ENCODE measurements at regions of chr6 and their contacts with region 1.

Region 1: GRCh38 chr6:44265007-44265721 is at the start of gene NFKBIE:
- DNase-seq: peak; percentile 96
- ATAC-seq: peak; percentile 52
- H3K4me3 ChIP-seq: peak within 1 kb of the TSS; percentile 94 to 99 (median 98)
- H3K4me3 Mint-ChIP-seq: peak within 1 kb of the TSS; percentile 100
- H3K27ac ChIP-seq: peak within 1 kb of the TSS; percentile 96 to 98
- H3K27ac Mint-ChIP-seq: peak within 1 kb of the TSS; percentile 100
- H3K4me1 ChIP-seq: peaks cover 48 to 61% of the 10 kb centered on the region in 2 donors
- H3K4me1 Mint-ChIP-seq: peaks cover 69% of the 10 kb centered on the region
- H3K27me3 ChIP-seq: peaks cover 0 to 13% (median 4%) of the 10 kb centered on the region in 4 experiments
- H3K27me3 Mint-ChIP-seq: peaks cover 8% of the 10 kb centered on the region
- CTCF ChIP-seq: peak; percentile 66
- total RNA-seq, gene NFKBIE: 46.5 and 50.8 TPM in 2 replicates

Region 2: DNA sequence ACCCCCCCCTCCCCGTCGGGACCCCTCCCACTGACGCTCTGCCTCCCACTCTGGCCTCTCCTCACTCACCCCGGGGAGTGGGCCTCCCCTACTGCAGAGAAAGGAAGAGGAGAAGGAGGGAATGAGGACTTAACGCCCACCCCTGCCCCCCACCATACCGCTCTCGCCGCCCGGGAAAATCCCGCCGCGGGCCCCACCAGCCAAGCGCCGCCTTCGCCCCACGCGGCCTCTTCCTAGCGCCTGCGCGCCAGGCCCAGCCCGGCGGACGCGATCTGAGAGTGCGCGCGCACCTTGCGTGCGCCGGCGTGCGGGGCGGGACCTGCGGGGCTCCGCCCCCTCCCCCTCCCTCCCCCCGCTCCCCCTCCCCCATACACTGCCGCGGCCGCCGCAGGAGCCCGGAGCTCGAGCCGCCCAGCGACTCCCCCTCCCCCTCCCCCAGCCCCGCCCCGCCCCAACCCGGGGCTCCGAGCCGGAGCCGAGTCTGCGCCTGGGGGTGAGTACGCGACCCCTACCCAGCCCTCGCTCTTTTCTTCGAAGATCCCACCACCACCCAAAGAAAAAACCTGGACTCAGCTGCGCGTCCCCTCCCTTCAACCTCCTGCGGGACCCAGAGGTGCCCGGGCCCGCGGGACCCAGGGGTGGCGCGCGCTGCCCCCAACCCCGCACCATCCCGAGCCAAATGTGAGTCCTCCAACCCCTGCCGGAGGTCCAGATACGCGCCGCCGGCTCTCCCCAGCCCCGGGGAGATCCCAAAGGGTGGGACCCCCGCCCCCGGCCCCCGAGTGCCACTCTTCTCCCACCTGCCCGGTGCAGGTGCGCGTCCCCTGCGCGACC is 137.8 kb before region 1 on chr6 and contains the starts of genes MRPL14 and TMEM63B:
- CTCF ChIA-PET with region 1: no interaction called
- POLR2A ChIA-PET with region 1: no interaction called
- intact Hi-C with region 1: loop called (anchors 5 kb)
- DNase-seq: peak; percentile 94
- ATAC-seq: peak; percentile 91
- H3K4me3 ChIP-seq: peak within 1 kb of the TSS; percentile 62 to 98 (median 91)
- H3K4me3 Mint-ChIP-seq: peak within 1 kb of the TSS; percentile 95
- H3K27ac ChIP-seq: peak within 1 kb of the TSS; percentile 83 to 94
- H3K27ac Mint-ChIP-seq: peak within 1 kb of the TSS; percentile 93
- H3K4me1 ChIP-seq: peaks cover 35 to 47% of the 10 kb centered on the region in 2 donors
- H3K4me1 Mint-ChIP-seq: peaks cover 50% of the 10 kb centered on the region
- H3K27me3 ChIP-seq: no peaks in the 10 kb centered on the region
- H3K27me3 Mint-ChIP-seq: no peaks in the 10 kb centered on the region
- CTCF ChIP-seq: no peak
- total RNA-seq, gene MRPL14: 16.7 and 16.8 TPM in 2 replicates
- total RNA-seq, gene TMEM63B: 18.3 and 19.1 TPM in 2 replicates

Region 3: DNA sequence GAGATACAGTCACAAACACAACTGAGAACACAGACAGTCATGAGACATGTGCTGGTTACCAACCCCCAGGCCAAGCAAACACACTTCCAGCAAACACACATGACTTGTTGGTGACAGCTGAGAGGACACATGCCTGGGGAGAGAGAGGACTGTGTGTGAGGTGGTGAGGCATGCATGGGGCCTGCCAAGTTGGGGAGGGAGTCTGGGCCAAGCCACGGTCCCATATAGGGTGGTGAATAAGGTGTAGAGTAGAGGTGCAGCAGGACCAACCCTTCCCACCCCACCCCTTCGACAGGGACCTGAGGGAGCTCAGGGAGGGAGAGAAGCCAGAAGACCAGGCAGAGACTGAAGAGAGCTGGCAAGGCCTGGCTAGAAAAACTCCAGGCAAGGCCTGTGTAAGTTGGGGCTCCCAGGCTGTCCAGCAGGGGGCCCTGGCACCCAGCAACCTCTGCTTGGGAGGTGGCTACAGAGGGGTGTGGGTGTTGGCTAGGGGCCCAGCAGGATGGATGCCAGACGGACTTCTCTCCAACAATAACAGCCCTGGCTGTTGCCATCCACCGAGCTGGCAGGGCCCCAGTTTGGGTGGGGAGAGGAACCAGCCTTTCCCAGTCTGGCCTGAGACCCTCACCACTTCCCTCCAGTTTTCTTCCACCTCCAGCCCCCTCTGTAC is 43.7 kb before region 1 on chr6:
- CTCF ChIA-PET with region 1: interaction called, 16 read pairs
- POLR2A ChIA-PET with region 1: no interaction called
- intact Hi-C with region 1: loop called (anchors 1 kb)
- DNase-seq: peak; percentile 81
- ATAC-seq: peak; percentile 40
- H3K4me3 ChIP-seq: no peak overlapping the region
- H3K4me3 Mint-ChIP-seq: peak overlapping the region; percentile 58
- H3K27ac ChIP-seq: no peak overlapping the region
- H3K27ac Mint-ChIP-seq: peak overlapping the region; percentile 13
- H3K4me1 ChIP-seq: peaks cover 26 to 45% of the 10 kb centered on the region in 2 donors
- H3K4me1 Mint-ChIP-seq: peaks cover 41% of the 10 kb centered on the region
- H3K27me3 ChIP-seq: peaks cover 0 to 2% (median 0%) of the 10 kb centered on the region in 4 experiments
- H3K27me3 Mint-ChIP-seq: no peaks in the 10 kb centered on the region
- CTCF ChIP-seq: peak; percentile 80

Region 4: DNA sequence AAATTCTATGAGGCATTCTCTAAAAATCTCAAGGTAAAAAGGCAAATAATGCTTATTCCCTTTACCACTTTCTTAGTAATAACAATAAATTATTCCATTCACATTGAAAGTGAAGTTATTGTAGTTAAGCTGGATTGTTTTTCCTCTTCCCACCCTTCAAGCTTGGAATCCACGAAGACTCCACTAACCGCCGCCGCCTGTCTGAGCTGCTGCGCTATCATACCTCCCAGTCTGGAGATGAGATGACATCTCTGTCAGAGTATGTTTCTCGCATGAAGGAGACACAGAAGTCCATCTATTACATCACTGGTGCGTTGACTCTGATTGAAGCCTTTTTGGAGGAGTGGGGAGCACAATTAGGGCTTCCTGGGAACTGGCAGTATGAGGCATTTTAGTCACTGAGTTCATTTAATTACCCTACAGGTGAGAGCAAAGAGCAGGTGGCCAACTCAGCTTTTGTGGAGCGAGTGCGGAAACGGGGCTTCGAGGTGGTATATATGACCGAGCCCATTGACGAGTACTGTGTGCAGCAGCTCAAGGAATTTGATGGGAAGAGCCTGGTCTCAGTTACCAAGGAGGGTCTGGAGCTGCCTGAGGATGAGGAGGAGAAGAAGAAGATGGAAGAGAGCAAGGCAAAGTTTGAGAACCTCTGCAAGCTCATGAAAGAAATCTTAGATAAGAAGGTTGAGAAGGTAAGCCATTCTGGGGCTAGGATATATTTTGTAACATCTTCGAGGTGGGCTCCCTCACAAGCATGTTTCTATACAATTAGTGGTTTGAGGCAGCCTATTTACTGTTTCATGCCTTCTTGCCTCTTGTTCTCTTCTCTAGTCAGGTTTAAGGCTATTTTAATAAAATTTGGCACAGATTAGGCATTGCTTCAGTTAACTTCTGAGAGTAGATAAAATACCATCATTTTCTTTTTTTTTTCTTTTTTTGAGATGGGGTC is 13.3 kb before region 1 on chr6:
- CTCF ChIA-PET with region 1: interaction called, 21 read pairs
- POLR2A ChIA-PET with region 1: interaction called, 105 read pairs
- intact Hi-C with region 1: loop called (anchors 1 kb)
- DNase-seq: no peak
- ATAC-seq: no peak
- H3K4me3 ChIP-seq: no peak overlapping the region
- H3K4me3 Mint-ChIP-seq: no peak overlapping the region
- H3K27ac ChIP-seq: no peak overlapping the region
- H3K27ac Mint-ChIP-seq: peak overlapping the region; percentile 12
- H3K4me1 ChIP-seq: peaks cover 21 to 55% of the 10 kb centered on the region in 2 donors
- H3K4me1 Mint-ChIP-seq: peaks cover 76% of the 10 kb centered on the region
- H3K27me3 ChIP-seq: no peaks in the 10 kb centered on the region
- H3K27me3 Mint-ChIP-seq: no peaks in the 10 kb centered on the region
- CTCF ChIP-seq: no peak

Region 5: DNA sequence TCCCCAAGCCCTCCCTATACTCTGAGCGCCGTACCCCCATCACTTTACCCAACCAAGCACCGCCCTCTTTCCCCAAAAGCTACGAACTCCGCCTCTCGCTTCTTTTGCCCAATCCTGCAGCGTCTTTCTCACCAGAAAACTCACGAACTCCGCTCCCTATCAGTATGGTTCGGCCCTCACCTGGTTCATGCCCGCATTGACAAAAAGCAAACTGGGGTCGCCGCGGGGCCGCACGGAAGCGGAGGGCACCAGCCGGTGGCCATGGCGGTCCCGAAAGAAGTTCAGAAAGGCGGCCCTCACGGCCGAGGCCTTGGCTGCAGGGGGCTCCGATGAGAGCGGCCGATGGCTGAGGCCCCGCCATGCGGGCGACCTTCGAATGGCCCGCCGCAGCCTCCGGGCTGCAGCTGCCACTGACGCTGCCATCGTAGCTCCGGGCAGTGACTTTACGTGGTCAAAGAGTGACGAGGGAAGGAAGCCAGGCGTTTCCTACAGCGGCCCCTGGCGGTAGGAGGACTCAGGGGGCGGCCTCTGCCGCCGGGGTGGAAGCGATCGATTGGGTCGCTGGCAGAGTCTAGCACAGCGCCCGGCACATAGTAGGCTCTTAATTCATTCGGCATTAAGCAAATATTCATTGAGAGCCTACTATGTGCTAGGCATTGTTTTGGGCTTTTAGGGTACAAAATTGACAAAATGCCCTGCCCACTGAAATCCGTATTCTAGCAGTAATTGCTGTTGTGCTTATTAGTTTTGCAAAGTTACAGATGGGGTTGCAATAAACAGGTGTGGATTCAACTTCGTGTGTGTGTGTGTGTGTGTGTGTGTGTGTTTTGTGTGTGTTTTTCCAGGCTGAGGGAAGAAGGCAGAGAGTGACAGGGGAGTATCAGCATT is 48.0 kb after region 1 on chr6 and contains the start of gene AARS2:
- CTCF ChIA-PET with region 1: interaction called, 107 read pairs
- POLR2A ChIA-PET with region 1: no interaction called
- intact Hi-C with region 1: loop called (anchors 1 kb)
- DNase-seq: peak; percentile 93
- ATAC-seq: peak; percentile 97
- H3K4me3 ChIP-seq: peak within 1 kb of the TSS; percentile 76 to 94 (median 88)
- H3K4me3 Mint-ChIP-seq: peak within 1 kb of the TSS; percentile 94
- H3K27ac ChIP-seq: peak within 1 kb of the TSS; percentile 72 to 86
- H3K27ac Mint-ChIP-seq: peak within 1 kb of the TSS; percentile 92
- H3K4me1 ChIP-seq: peaks cover 7 to 9% of the 10 kb centered on the region in 2 donors
- H3K4me1 Mint-ChIP-seq: peaks cover 17% of the 10 kb centered on the region
- H3K27me3 ChIP-seq: peaks cover 0 to 4% (median under 1%) of the 10 kb centered on the region in 4 experiments
- H3K27me3 Mint-ChIP-seq: peaks cover 2% of the 10 kb centered on the region
- CTCF ChIP-seq: peak; percentile 97
- total RNA-seq, gene AARS2: 21.3 and 22.6 TPM in 2 replicates

Region 6: GRCh38 chr6:44387346-44388133 is 122.4 kb after region 1 on chr6 and contains the start of gene CDC5L:
- CTCF ChIA-PET with region 1: no interaction called
- POLR2A ChIA-PET with region 1: no interaction called
- intact Hi-C with region 1: loop called (anchors 5 kb)
- DNase-seq: peak; percentile 98
- ATAC-seq: peak; percentile 89
- H3K4me3 ChIP-seq: peak within 1 kb of the TSS; percentile 69 to 98 (median 93)
- H3K4me3 Mint-ChIP-seq: peak within 1 kb of the TSS; percentile 100
- H3K27ac ChIP-seq: peak within 1 kb of the TSS; percentile 83 to 93
- H3K27ac Mint-ChIP-seq: peak within 1 kb of the TSS; percentile 99
- H3K4me1 ChIP-seq: peaks cover 20 to 21% of the 10 kb centered on the region in 2 donors
- H3K4me1 Mint-ChIP-seq: peaks cover 38% of the 10 kb centered on the region
- H3K27me3 ChIP-seq: no peaks in the 10 kb centered on the region
- H3K27me3 Mint-ChIP-seq: no peaks in the 10 kb centered on the region
- CTCF ChIP-seq: no peak
- total RNA-seq, gene CDC5L: 22.2 and 22.5 TPM in 2 replicates